ENCODE measurements at regions of chr12 and their contacts with region 1.

Region 1: DNA sequence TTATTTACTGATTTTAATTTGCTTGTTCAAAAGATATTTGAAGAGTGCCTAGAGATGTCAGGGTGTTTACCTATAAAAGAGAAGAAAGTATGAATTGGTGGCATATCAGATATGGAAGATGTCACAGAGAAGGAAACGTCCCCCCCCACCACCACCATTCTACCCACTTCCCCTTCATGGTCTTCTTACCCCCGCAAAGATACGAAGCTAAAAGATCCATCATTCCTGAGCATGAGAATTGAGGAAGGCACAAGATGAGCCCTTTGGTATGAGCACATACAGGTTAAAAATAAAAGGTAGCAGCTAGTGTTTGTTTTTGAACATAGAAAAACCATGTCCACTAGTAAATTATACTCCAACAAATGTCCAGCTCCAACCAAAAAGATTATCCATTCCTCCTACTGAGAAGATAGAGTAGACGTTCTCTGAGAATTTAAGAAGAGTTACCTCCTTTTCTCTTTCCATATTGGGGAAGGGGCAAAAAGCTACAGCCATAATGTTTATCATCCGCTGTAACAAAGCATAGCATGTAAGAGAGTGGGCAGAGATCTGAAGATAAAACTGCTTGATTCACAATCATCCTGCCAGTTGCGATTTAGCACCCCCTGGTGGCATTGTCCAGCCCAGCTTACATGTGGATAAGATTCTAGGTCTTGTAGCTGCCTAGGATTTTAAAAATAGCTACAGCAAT is 29.1 kb downstream of the NFYB start:
- DNase-seq: peak; percentile 29 to 91
- H3K4me3 ChIP-seq: no peak overlapping the region
- H3K27ac ChIP-seq: no peak overlapping the region
- H3K4me1 ChIP-seq: no peaks in the 10 kb centered on the region
- H3K27me3 ChIP-seq: no peaks in the 10 kb centered on the region
- CTCF ChIP-seq: peak; percentile 55 to 88 (median 78)

Region 2: GRCh38 chr12:103884316-103884715 is 224.6 kb before region 1 on chr12:
- intact Hi-C with region 1: loop called (anchors 2 kb)
- DNase-seq: no peak
- H3K4me3 ChIP-seq: no peak overlapping the region
- H3K27ac ChIP-seq: no peak overlapping the region
- H3K4me1 ChIP-seq: no peaks in the 10 kb centered on the region
- H3K27me3 ChIP-seq: no peaks in the 10 kb centered on the region
- CTCF ChIP-seq: peak in 2 of 3 experiments; percentile 40 to 62

Region 3: GRCh38 chr12:104057771-104058197 is 51.1 kb before region 1 on chr12:
- intact Hi-C with region 1: loop called (anchors 5 kb)
- DNase-seq: no peak
- H3K4me3 ChIP-seq: no peak overlapping the region
- H3K27ac ChIP-seq: no peak overlapping the region
- H3K4me1 ChIP-seq: peaks cover 0 to 5% of the 10 kb centered on the region in 2 donors
- H3K27me3 ChIP-seq: no peaks in the 10 kb centered on the region
- CTCF ChIP-seq: peak; percentile 20 to 64 (median 38)

Measured in ascending aorta (tissue), 2 donors.